ENCODE measurements at regions of chr17 and their contacts with region 1.

Region 1: GRCh38 chr17:17681187-17681848 is at the start of gene RAI1:
- DNase-seq: peak in 40 of 42 donors; percentile 55 to 89 (median 80)

Region 2: DNA sequence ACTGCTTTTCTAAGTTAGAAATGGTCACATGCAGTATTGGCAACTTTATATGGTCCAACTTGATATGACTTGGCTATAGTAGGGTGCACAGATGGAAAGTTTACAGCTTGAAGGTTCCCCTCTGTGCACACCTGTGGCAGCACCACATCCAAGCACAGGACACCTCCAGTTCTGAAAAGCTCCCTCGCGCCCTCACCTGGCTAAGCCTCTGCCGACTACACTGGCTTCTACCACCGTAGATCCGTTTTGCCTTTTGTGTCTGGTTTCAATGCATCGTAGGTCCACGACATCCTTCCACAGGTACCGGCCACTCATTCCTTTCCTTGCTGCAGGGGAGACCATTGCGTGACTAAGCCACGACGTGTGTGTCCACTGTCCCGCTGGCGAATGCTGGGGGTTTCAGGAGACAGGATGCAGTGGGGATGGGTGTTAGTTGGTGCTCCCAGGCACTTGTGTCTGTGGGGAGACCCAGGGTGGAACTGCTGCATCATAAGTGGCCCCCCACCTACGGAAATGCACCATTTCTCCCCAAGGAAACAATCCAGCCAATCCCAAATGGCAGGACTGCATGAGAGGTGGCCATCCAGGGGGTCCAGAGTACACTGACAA is 180.2 kb before region 1 on chr17:
- intact Hi-C with region 1: no loop called
- DNase-seq: peak in 4 of 42 donors; percentile 51 to 77 (median 64)

Region 3: DNA sequence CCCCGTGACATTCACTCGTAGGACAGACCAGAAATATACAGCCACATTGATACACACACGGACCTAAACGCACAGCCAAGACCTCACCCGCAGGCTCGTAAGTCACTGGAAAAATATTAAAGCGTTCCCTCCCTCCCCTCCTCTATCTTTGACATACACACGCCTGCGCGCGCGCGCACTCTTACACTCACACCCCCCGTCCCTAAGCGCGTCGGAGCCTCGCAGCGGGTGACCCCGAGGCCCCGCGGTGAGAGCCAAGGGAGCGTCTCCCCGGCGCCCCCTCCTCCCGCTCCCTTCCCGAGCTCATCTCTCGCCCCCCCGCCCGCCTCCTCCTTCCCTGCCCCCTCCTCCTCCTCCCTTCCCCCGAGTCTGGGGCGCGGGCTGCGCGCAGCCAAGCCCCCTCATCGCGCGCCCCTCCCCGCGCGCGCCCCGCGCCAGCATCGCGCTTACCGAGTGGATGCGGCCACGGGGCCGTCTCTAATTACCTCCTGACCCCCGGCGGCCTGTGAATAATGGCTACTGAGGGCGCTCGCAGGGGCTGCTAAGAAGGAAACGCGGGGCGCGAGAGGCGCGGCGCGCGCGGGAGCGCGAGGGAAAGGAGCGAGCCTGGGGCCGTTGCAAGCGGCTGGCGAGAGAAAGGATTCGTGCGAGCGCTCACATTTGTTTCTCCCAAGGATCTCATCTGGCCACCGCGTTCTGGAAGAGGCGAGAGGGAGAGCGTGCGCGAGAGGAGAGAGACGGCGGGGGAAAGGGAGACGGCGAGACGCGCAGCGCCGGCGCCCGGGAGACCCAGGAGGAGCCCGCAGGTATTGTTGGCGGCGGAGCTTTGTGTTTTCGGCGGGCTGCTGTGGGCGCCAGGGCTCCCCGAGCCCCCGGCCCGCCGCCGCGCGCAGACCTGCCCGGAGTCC is 42.3 kb after region 1 on chr17:
- intact Hi-C with region 1: loop called (anchors 5 kb)
- DNase-seq: peak in 39 of 42 donors; percentile 50 to 86 (median 73)

Region 4: DNA sequence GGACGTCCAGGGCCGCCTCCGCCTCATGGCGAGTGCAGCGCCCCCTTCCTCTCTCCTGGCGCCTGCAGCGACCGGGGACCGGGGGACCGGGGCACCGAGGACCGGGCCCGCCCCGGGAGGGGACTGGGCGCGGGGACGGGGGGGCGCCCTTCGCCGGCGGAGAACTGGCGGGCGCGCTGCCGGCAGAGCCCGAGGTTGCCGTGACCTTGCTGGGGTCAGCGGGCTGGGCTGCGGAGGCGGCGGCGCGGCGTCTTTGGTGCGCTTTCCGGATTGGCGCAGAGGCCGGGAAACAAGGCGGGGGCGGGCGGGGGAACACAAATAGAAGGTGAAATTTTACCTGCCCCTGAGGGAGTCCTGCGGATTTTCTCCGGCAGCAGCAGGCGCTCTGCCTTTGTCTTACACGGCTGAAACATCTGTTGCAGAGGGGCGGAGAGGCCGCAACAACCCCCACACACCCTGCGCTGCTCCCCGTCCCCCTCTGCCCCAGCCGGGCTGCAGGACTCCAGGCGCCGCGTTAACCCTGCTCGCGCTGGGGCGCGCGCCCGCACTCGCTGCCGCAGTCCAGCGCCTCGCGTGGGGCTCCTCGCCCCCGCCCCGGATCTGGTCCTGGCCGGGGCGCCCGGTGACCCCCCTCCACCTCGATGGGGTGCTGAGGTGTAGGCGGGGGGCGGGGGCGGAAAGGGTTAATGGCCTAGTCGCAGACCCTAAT is 102.0 kb after region 1 on chr17:
- intact Hi-C with region 1: loop called (anchors 10 kb)
- DNase-seq: peak in 41 of 42 donors; percentile 40 to 88 (median 69)

Region 5: DNA sequence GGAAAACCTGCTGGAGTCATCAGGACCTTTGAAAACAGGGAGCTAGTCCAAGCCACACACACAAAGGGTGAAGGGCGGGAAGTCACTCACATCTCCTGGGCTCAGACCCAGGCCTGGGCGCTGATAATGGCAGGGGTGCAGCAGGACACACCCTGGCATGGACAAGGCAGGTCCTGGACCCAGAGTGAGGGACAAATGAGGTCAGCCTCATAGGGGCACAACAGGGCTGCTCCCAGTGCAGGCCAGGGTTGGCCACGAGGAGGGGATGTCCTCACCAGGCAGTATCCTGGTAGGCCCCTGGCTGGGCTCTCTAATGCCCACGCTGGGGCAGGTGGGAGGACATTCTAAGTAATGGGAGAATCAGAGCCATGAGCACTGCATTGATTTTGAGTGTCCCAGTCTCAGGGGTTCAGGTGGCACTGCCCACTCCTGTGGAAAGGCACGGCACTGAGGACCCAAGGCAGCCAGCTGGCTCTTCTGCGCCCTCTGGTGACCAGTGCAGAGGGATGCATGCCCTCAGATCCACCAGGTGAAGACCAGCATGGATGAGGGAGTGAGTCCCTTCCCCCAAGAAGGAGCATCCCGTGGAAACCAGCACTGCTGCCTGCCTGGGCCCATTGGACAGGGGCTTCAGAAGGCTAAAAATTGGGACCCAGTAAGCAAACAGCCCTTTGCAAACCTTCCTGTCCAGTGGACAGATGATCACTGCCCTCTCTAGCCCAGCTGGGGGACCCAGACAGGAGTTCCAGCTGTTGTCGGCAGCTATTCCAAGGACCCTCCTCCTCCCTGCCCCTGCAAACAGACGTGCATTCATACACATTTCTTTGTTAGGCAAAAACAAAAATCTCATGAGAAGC is 178.8 kb after region 1 on chr17:
- intact Hi-C with region 1: loop called (anchors 5 kb)
- DNase-seq: peak; percentile 50 to 92 (median 80)